WTC11 (cell line): ENCODE measurements at regions of chr3 and their contacts with region 1.

Region 1: DNA sequence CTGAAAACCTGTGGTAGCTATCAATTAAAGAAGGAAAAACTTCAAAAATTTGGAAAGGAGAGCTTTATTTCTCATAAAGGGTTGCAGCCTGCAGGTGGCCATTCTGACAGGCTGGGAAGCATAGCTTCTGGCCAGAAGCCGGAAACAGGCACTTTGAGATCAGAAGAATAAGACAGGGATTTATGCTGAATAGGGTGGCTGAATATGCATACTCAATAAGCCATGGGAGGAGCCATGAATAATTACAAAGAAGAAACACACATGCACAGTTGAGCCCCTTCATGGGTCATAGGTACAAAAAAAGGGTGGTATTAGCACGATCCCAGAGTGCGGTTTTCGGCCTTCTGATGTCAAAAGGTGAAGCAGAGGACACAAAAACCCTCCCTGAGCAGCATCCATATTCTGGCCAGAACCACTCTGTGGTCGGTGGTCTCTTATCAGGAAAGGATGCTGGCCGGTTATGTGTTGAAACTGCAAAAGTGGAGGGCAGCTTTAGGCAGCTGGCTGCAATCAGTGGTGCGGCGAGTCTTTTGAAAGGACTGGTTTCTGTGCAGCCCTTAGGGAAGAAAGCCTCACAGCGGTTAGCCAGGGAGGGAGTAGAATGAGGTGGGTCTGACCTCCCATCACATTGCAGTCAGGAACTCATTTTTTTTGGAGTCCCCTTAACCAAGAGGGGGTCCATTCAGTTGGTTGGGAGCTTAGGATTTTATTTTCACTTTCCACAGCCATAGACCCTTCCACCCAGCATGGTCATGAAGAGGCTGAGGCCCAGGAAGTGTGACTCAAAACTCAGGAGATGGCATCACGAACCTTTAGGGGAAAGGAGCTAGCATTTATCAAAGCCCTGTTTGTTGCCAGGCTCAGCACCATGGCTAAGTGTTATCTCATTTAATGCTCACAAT is 34.7 kb upstream of the CCDC174 start:
- DNase-seq: no peak
- ATAC-seq: peak; percentile 26; the same call in 1 of the 2 replicates
- H3K4me3 Mint-ChIP-seq: no peak overlapping the region
- H3K27ac Mint-ChIP-seq: no peak overlapping the region
- H3K4me1 Mint-ChIP-seq: peaks cover 17% of the 10 kb centered on the region
- H3K27me3 Mint-ChIP-seq: peaks cover 8% of the 10 kb centered on the region
- CTCF ChIP-seq: no peak

Region 2: GRCh38 chr3:14857506-14857905 is 240.6 kb after region 1 on chr3:
- CTCF ChIA-PET with region 1: no interaction called
- POLR2A ChIA-PET with region 1: interaction called, 11 read pairs
- DNase-seq: no peak
- ATAC-seq: peak; percentile 71
- H3K4me3 Mint-ChIP-seq: no peak overlapping the region
- H3K27ac Mint-ChIP-seq: no peak overlapping the region
- H3K4me1 Mint-ChIP-seq: peaks cover 24% of the 10 kb centered on the region
- H3K27me3 Mint-ChIP-seq: no peaks in the 10 kb centered on the region; the same call in 1 of the 2 replicates
- CTCF ChIP-seq: no peak